RWPE1 (cell line): ENCODE measurements at regions of chr11 and their contacts with region 1.

Region 1: GRCh38 chr11:118565051-118565450 is 680 bp downstream of the IFT46 start:
- DNase-seq: peak; percentile 7
- H3K27ac ChIP-seq: peak overlapping the region; percentile 61
- CTCF ChIP-seq: no peak

Region 2: DNA sequence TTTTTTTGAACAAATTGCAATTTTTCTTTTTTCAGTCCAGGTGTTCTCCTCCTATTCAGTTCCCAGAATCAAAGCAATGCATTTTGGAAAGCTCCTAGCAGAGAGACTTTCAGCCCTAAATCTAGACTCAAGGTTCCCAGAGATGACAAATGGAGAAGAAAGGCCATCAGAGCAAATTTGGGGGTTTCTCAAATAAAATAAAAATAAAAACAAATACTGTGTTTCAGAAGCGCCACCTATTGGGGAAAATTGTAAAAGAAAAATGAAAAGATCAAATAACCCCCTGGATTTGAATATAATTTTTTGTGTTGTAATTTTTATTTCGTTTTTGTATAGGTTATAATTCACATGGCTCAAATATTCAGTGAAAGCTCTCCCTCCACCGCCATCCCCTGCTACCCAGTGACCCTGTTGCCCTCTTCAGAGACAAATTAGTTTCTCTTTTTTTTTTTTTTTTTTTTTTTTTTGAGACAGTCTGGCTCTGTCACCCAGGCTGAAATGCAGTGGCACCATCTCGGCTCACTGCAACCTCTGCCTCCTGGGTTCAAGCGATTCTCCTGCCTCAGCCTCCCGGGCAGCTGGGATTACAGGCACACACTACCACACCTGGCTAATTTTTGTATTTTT is 211.9 kb before region 1 on chr11:
- CTCF ChIA-PET with region 1: no interaction called
- POLR2A ChIA-PET with region 1: no interaction called
- DNase-seq: peak; percentile 5
- H3K27ac ChIP-seq: no peak overlapping the region
- CTCF ChIP-seq: peak; percentile 61

Region 3: GRCh38 chr11:118552341-118552740 is 12.7 kb before region 1 on chr11:
- CTCF ChIA-PET with region 1: no interaction called
- POLR2A ChIA-PET with region 1: interaction called, 12 read pairs
- DNase-seq: no peak
- H3K27ac ChIP-seq: no peak overlapping the region
- CTCF ChIP-seq: no peak

Region 4: GRCh38 chr11:118672846-118673245 is 107.8 kb after region 1 on chr11:
- CTCF ChIA-PET with region 1: no interaction called
- POLR2A ChIA-PET with region 1: no interaction called
- DNase-seq: no peak
- H3K27ac ChIP-seq: no peak overlapping the region
- CTCF ChIP-seq: no peak